ENCODE measurements at regions of chr20 and their contacts with region 1.

Region 1: GRCh38 chr20:49046087-49046900 is at the start of gene CSE1L:
- DNase-seq: peak; percentile 93 to 98 (median 96)
- H3K4me3 ChIP-seq: peak within 1 kb of the TSS; percentile 76 to 100 (median 98)
- H3K27ac ChIP-seq: peak within 1 kb of the TSS; percentile 79 to 99 (median 93)
- H3K27me3 ChIP-seq: no peaks in the 10 kb centered on the region
- CTCF ChIP-seq: peak in 39 of 56 donors; percentile 6 to 49 (median 24)
- total RNA-seq, gene CSE1L: 28.8 to 70.9 (median 55.4) TPM

Region 2: DNA sequence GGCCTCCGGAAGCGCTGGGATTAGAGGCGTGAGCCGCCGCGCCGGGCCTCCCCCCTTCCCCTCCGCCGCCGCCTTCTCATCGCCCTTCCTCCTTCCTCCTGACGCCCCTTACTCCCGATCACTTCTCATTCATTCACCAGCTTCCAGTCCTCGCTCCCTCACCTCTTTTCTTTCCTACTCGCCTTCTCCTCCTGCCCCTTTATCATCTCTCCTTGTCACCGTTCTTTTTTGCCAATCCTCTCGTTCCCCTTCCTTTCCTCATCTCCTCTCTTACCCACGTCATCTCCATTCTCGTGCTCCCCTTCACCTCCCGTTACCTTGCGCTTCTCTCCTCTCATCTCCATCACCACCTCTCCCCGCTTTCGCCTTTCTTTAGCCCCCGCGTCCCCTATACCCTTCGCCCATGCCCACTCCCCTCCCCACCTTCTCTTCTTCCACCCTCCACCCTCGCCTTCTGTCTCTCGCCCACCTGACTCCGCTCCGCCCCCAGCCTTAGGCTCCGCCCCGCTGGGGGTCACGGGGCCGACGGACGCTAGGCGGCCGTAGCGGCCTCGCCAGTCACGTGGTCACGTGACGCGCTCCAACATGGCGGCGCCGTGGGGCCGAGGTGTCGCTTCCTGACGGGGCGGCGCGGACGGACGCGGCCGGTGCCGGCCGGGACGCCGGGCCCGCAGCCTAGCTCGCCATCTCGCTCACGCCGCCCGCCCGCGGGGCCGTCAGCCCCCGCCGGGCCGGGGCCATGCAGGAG is 125.0 kb before region 1 on chr20 and contains the start of gene ARFGEF2:
- intact Hi-C with region 1: loop called in 1 of 2 experiments (anchors 5 kb)
- DNase-seq: peak; percentile 83 to 96 (median 92)
- H3K4me3 ChIP-seq: peak within 1 kb of the TSS; percentile 66 to 100 (median 94)
- H3K27ac ChIP-seq: peak within 1 kb of the TSS; percentile 59 to 98 (median 91)
- H3K27me3 ChIP-seq: no peaks in the 10 kb centered on the region
- CTCF ChIP-seq: peak in 32 of 56 donors; percentile 10 to 64 (median 34)
- total RNA-seq, gene ARFGEF2: 28.4 to 72.0 (median 52.6) TPM

Region 3: DNA sequence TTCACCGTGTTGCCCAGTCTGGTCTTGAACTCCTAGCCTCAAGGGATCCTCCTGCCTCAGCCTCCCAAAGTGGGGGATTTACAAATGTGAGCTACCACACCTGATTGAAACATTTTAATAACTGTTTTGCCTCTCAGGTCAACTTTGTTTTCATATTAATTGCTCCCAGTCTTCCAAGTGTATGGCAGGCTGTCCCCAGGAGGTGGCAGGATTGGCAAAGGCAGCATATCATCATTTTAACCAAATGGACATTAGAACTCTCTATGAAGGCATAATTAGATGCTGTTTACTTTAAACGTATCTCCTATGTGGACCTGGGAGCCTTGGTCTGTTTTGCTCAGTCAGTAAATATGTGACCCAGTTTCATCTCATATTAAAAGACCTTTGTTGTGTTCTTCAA is 59.4 kb before region 1 on chr20:
- intact Hi-C with region 1: loop called in 1 of 2 experiments (anchors 5 kb)
- DNase-seq: peak in 1 of 10 donors; percentile 50
- H3K4me3 ChIP-seq: no peak overlapping the region
- H3K27ac ChIP-seq: peak overlapping the region in 19 of 59 donors; percentile 1 to 66 (median 22)
- H3K27me3 ChIP-seq: no peaks in the 10 kb centered on the region
- CTCF ChIP-seq: peak in 54 of 56 donors; percentile 25 to 73 (median 47)

Region 4: DNA sequence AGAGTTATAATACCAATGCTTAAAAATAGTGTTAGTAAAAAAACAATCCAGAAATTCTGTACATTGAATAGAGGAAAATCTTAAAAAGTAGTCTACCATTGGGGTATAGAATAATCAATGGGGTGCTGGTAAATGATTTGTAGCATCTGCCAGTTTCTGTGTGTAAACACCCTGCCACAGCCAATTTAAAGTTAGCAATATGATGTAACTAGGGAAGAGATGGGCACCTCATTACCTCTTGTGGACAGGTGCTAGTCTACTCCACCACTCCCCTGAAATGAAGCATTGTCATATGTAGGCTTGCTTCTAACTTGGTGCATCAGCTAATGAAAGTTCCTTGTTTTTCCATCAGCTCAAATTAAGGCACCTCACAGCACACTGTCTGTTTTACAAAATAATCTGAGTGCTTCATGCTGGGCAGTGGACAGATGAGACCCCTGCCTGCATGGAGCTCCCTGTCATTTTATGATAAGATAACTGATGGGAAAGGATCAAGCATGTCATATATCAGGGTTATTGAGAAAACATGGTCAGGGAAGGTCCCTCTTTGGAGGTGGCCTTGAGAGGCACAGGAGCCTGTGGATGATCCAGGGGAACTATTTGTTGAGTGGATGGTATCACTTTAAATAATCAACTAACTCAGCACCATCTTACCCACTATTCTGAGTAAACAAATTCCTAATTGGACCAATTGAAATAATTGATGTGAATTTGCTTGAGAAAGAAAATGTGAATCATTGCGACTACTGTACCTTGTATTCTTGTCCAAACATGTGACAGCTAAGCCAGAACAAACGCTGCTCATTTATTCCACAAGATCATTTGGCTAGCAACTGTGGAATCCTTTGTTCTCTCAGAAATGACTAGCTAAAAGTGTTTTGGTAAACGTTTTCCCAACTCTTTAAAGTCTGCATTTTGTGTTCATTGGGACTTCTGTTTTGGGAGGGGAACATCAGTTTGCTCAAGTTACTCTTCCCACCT is 46.1 kb before region 1 on chr20:
- intact Hi-C with region 1: no loop called
- DNase-seq: no peak
- H3K4me3 ChIP-seq: peak overlapping the region in 4 of 59 donors; percentile 7 to 36 (median 12)
- H3K27ac ChIP-seq: peak overlapping the region in 57 of 59 donors; percentile 12 to 91 (median 76)
- H3K27me3 ChIP-seq: no peaks in the 10 kb centered on the region
- CTCF ChIP-seq: no peak

Region 5: GRCh38 chr20:49132995-49133478 is 86.7 kb after region 1 on chr20:
- intact Hi-C with region 1: no loop called
- DNase-seq: peak in 1 of 10 donors; percentile 13
- H3K4me3 ChIP-seq: no peak overlapping the region
- H3K27ac ChIP-seq: peak overlapping the region in 20 of 59 donors; percentile 1 to 61 (median 28)
- H3K27me3 ChIP-seq: no peaks in the 10 kb centered on the region
- CTCF ChIP-seq: peak; percentile 51 to 86 (median 73)

Region 6: DNA sequence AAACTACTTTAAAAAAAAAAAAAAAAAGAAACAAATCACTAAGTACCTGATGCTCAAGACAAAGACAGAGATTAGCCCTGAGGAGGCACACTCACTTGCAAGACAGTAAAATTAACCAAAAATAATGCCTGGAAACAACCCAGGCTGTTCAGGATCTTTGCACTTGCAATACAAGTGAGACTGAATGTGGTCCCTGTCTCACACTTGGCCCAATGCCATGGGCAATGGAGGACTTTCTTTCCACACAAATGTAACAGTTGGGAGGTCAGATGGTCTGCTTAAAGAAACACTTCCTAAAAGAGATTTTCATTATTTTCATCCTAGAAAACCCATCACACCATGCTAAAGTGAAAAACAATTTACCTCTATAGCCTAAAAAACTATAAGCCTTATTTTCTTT is 125.6 kb after region 1 on chr20:
- intact Hi-C with region 1: no loop called
- DNase-seq: peak in 3 of 10 donors; percentile 25 to 50 (median 45)
- H3K4me3 ChIP-seq: no peak overlapping the region
- H3K27ac ChIP-seq: peak overlapping the region in 12 of 59 donors; percentile 5 to 65 (median 14)
- H3K27me3 ChIP-seq: no peaks in the 10 kb centered on the region
- CTCF ChIP-seq: no peak

Region 7: DNA sequence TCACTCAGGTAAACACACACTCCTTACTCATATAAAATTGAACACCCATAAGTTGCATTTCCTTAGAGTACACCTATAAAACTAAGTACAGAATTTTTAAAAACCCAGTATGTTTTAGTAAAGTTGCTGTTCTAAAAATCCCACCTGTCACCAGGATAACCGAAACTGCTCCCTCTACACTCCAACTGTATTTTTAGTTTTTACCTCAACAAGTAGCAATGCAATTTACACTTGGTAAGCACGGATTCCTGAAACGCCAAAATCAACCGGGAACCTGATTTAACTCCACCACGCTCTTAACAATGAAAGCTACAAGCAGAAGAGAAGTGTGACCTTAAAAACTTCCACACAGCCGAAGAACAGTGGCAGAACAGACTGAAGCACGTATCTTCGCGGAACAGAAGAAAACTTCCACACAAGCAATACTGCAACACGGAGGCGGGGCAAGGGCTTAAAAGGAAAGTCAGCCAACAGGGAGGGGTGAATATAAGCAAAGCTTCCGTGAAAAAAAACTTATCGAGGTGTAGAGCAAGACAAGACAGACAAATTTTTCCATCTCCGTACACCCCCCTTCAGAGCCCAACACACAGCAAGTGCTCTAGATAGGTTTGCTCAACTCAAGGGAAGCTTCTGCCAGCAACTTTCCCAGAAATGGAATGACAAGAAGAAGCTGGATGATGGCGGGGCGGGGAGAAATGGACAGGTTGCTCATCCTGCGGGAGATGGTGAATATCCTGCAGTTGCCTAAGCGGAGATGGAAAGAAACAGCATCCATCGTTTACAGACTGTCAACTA is 140.4 kb after region 1 on chr20:
- intact Hi-C with region 1: loop called in 1 of 2 experiments (anchors 5 kb)
- DNase-seq: peak in 2 of 10 donors; percentile 33 to 36
- H3K4me3 ChIP-seq: peak overlapping the region; percentile 52 to 95 (median 80)
- H3K27ac ChIP-seq: peak overlapping the region in 50 of 59 donors; percentile 29 to 93 (median 84)
- H3K27me3 ChIP-seq: no peaks in the 10 kb centered on the region
- CTCF ChIP-seq: no peak

Region 8: GRCh38 chr20:49278036-49278817 is 231.9 kb after region 1 on chr20 and contains the start of gene ZNFX1:
- intact Hi-C with region 1: loop called in 1 of 2 experiments (anchors 5 kb)
- DNase-seq: peak; percentile 97 to 99 (median 98)
- H3K4me3 ChIP-seq: peak within 1 kb of the TSS; percentile 56 to 100 (median 90)
- H3K27ac ChIP-seq: peak within 1 kb of the TSS; percentile 71 to 100 (median 98)
- H3K27me3 ChIP-seq: no peaks in the 10 kb centered on the region
- CTCF ChIP-seq: peak in 45 of 56 donors; percentile 1 to 57 (median 30)
- total RNA-seq, gene ZNFX1: 21.0 to 37.9 (median 26.1) TPM